Gastrocnemius medialis (tissue), 4 donors: ENCODE measurements at regions of chr2 and their contacts with region 1.

Region 1: DNA sequence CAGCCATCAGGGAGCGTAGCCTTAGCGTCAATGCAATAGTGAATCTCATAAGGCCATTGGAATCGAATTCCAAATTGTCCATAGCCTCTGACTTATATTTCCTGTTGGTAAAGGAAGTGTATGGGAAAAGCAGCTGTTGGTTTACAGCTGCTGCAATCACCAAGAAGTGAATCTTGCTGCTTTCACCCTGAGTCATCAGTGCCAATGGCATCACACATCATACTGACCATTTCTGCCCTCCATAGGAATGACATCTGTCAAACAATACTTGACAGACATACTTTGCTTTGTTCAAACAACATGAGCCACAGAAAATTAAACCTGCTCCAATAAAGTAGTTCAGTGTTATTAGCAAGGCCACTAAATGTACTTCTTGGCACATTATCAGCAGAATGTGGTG is 111.2 kb upstream of the KLHL29 start:
- DNase-seq: no peak
- ATAC-seq: no peak
- H3K4me3 ChIP-seq: no peak overlapping the region
- H3K27ac ChIP-seq: no peak overlapping the region
- H3K4me1 ChIP-seq: peaks cover 7 to 18% of the 10 kb centered on the region in 2 donors
- H3K27me3 ChIP-seq: no peaks in the 10 kb centered on the region
- CTCF ChIP-seq: no peak
- POLR2A ChIP-seq: no peak

Region 2: GRCh38 chr2:23346029-23346428 is 72.2 kb after region 1 on chr2:
- in situ Hi-C with region 1: no loop called
- intact Hi-C with region 1: no loop called
- DNase-seq: no peak
- ATAC-seq: no peak
- H3K4me3 ChIP-seq: no peak overlapping the region
- H3K27ac ChIP-seq: no peak overlapping the region
- H3K4me1 ChIP-seq: peaks cover under 1 to 3% of the 10 kb centered on the region in 2 donors
- H3K27me3 ChIP-seq: no peaks in the 10 kb centered on the region
- CTCF ChIP-seq: no peak
- POLR2A ChIP-seq: no peak

Region 3: DNA sequence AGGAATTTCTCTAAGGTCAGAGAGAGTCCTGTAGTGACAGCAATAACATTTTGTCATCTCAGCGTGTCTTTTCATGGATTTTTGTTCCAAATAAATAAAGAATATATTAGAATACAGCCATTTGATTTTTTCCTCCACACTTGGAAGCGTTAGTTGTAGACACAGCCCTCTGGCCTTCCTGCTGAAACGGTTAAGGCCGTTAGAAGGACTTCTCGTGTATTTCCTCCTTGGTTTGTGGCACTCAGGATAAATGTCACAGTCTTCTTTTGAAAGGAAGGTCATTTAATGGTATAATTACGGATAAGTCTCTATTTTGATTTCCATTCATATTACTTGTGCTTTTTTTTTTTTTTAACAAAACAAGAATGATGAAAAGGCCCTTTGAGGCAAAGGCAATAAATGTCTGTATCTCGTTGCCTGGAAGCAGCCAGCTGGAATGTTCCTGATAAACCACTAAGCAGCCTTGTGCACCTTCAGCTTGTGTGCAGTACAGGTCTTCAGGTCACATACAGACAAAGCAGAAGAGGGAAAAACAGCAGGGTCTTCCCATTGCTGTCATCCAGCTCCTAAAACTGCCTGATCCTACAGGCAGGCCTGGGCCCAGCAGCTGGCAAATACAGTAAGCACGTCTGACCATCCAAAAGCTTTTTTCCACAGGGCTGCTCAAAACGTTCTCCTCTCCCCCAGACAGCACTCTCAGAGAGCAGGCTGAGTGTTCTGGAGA is 1782.5 kb after region 1 on chr2:
- in situ Hi-C with region 1: no loop called
- intact Hi-C with region 1: loop called (anchors 10 kb)
- DNase-seq: no peak
- ATAC-seq: no peak
- H3K4me3 ChIP-seq: no peak overlapping the region
- H3K27ac ChIP-seq: no peak overlapping the region
- H3K4me1 ChIP-seq: peaks cover 0 to 5% of the 10 kb centered on the region in 2 donors
- H3K27me3 ChIP-seq: no peaks in the 10 kb centered on the region
- CTCF ChIP-seq: no peak
- POLR2A ChIP-seq: no peak